ENCODE measurements at regions of chr11 and their contacts with region 1.

Region 1: DNA sequence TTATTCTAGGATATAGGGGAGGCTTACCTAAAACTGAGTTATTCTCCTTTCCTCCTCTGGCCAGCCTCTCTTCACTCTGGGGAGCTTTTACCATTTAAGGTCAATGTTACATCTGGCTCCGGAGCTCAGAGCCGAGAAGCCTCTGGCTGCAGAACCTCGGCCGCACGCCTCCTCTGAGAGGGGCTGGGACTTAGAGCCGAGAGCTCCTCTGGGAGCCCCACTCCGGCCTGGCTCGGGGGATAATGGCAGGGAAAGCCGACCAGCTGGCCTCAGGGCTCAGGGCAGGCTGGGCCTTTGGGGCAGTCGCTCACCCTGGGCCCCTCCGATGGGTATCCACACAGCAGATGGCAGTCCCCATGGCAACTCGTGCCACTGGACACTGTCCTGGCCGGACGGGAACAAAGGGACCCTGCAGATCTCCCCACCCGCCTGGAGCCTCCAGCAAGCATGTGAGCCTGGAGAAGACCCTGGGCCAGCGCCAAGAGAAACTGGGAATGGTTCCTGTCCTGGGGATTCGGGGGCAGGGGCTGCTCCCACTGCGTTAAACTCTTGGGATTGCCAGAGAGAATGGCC is at the start of gene IRAG1:
- DNase-seq: no peak
- H3K4me3 ChIP-seq: no peak within 1 kb of the TSS
- H3K27ac ChIP-seq: no peak within 1 kb of the TSS
- H3K4me1 ChIP-seq: peaks cover 7% of the 10 kb centered on the region
- H3K27me3 ChIP-seq: no peaks in the 10 kb centered on the region
- CTCF ChIP-seq: no peak
- total RNA-seq, gene IRAG1: 0.31 to 2.0 TPM

Region 2: DNA sequence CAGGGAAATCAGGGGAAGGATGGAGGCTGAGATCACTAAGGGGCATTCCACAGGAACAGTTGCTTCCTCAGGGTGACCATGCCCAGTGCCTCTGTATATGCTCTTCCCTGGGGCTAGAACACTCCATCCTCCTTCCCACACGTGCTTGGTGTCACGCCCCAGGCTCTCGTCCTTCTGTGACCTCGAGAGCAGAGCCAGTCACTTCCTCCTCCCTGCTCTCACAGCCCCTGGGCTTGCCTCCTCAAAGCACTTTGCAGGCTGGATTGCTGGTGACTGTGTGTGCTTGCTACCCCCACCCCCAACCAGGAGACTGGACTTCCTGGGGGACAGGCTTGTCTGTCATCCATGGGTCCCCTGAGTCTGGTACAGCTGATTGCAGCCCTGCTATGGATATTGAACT is 295.1 kb before region 1 on chr11:
- CTCF ChIA-PET with region 1: no interaction called
- dilution Hi-C with region 1: loop called (anchors 10 kb)
- in situ Hi-C with region 1: no loop called
- intact Hi-C with region 1: no loop called
- DNase-seq: no peak
- H3K4me3 ChIP-seq: no peak overlapping the region
- H3K27ac ChIP-seq: no peak overlapping the region
- H3K4me1 ChIP-seq: no peaks in the 10 kb centered on the region
- H3K27me3 ChIP-seq: no peaks in the 10 kb centered on the region
- CTCF ChIP-seq: no peak

Region 3: DNA sequence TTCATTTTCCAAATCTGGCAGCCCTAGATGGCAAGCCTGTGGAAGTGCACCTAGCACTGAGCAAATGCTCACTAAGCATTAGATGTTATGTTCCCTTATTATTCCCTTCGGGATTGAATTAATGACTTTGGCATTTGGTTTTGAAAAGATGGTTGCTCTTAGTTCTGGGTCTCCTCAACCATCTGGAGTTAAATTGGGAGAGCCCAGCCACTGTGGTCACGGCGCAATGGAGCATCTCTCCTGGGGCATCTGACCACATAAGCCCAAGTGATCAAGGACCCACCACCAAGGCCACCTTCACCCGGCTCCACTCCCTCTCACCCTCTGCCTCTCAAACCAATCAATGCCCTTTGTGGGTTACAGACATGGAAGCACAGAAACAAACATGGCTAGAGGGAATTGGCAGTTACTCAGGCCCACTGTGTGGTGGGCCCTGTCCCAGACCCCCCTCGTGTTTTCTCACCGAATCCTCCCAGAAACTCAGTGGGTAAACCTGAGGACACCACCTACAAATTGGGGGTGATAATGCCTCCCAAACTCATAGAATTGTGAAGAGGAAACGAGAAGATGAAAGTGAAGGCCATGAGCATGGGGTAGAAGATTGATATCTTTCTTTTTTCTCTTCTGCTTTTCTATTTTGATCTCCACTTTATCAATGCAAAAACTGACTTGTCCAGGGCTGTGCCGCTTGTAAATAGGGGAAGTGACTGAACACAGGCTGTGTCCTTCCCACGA is 52.3 kb before region 1 on chr11:
- CTCF ChIA-PET with region 1: no interaction called
- dilution Hi-C with region 1: no loop called
- in situ Hi-C with region 1: no loop called
- intact Hi-C with region 1: no loop called
- DNase-seq: no peak
- H3K4me3 ChIP-seq: no peak overlapping the region
- H3K27ac ChIP-seq: no peak overlapping the region
- H3K4me1 ChIP-seq: no peaks in the 10 kb centered on the region
- H3K27me3 ChIP-seq: no peaks in the 10 kb centered on the region
- CTCF ChIP-seq: no peak

Measured in mammary epithelial cell (primary cell).